B cell (primary cell): ENCODE measurements at regions of chr2 and their contacts with region 1.

Region 1: DNA sequence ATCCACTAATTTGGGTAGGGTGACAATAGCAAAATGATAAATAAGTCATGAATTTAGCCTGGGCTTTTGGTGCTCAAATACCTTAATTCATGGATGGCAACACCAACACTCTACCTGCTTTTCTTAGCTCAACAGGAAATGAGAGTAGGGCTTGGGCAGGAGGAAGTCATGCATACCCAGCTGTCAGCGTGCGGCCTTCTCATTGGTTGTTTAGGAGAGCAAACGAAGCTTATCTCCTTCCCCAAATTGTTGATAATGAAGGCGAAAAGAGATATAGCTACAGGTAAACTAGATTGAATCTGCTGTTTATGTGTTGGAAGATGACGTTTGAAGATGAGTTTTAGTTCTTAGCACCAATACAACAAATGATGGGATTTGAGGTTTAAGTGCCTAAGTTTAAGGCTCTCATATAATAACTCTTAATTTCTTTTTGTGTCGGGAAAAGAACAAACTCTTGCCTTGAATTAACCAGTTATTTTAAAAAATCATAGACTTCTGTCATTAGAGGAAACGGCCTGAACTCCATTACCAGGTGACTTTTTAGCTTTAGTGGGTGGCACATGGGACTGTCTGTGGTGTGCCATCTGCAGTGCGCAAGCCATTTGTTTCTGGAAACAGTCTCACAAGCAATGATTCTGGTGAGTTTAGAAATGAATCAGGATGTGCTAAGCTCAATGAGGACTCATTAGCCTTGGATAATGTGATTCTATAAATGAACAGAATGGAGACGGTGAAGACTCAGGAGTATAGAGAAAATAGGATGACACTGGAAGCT is 19.8 kb downstream of the MAP4K4 start:
- DNase-seq: peak; percentile 93
- ATAC-seq: peak; percentile 85
- H3K4me3 ChIP-seq: peak overlapping the region in 4 of 5 experiments; percentile 5 to 52 (median 19)
- H3K4me3 Mint-ChIP-seq: peak overlapping the region; percentile 83
- H3K27ac ChIP-seq: peak overlapping the region; percentile 94 to 99
- H3K27ac Mint-ChIP-seq: peak overlapping the region; percentile 96
- H3K4me1 ChIP-seq: peaks cover 92 to 93% of the 10 kb centered on the region in 2 donors
- H3K4me1 Mint-ChIP-seq: peaks cover 83% of the 10 kb centered on the region
- H3K27me3 ChIP-seq: no peaks in the 10 kb centered on the region
- H3K27me3 Mint-ChIP-seq: no peaks in the 10 kb centered on the region
- CTCF ChIP-seq: no peak

Region 2: GRCh38 chr2:101655702-101656422 is 61.4 kb before region 1 on chr2:
- CTCF ChIA-PET with region 1: no interaction called
- POLR2A ChIA-PET with region 1: interaction called, 6 read pairs
- intact Hi-C with region 1: loop called (anchors 5 kb)
- DNase-seq: no peak
- ATAC-seq: no peak
- H3K4me3 ChIP-seq: no peak overlapping the region
- H3K4me3 Mint-ChIP-seq: no peak overlapping the region
- H3K27ac ChIP-seq: no peak overlapping the region
- H3K27ac Mint-ChIP-seq: no peak overlapping the region
- H3K4me1 ChIP-seq: peaks cover 11 to 16% of the 10 kb centered on the region in 2 donors
- H3K4me1 Mint-ChIP-seq: peaks cover 15% of the 10 kb centered on the region
- H3K27me3 ChIP-seq: no peaks in the 10 kb centered on the region
- H3K27me3 Mint-ChIP-seq: no peaks in the 10 kb centered on the region
- CTCF ChIP-seq: no peak